ENCODE measurements at regions of chr16 and their contacts with region 1.

Region 1: DNA sequence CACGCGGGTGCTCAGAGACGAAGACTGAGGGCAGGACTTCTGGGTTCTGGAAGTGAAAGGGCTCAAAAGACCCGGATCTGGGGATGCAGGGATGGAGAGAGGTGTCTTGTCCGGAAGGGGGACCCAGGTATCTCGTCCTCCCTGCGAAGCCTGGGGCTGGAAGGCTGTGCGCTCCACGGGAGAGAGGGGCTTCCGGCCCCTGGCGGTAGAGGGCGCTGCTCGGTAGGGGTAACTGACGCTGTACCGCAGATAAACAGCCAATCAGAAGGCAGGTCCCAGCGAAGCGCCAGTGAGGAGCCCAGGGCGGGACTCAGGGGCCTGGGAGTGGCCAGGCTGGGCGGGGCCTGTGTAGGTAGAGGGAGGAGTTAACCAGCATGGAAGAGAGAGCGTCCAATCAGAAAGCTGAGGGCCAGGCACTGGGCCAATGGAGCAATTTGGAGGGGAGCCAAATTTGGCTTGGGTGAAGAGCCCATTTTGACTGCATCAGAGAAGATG is 804 bp downstream of the TGFB1I1 start:
- DNase-seq: no peak
- H3K4me3 Mint-ChIP-seq: peak overlapping the region; percentile 70
- H3K27ac Mint-ChIP-seq: no peak overlapping the region
- H3K4me1 Mint-ChIP-seq: peaks cover 20% of the 10 kb centered on the region
- H3K27me3 Mint-ChIP-seq: peaks cover 46% of the 10 kb centered on the region

Region 2: DNA sequence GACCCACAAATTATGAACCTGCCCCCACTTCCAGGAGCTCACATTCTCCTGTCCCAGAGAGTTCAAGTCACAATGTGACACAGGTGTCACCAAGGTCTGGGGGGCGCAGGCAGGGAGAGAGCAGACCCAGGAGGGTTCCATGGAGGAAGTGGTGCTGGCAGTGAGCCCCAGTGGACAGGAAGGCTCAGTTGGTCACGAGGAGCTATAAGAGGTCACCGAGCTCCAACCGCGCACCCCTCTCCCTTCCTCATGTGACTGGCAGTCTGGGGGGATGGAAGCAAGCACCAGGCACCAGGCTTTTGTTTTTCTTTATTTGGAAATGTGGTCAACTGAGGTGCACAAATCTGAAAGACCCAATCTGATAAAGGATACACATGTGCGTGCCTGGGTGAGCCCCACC is 77.1 kb before region 1 on chr16:
- intact Hi-C with region 1: no loop called
- DNase-seq: no peak
- H3K4me3 Mint-ChIP-seq: no peak overlapping the region
- H3K27ac Mint-ChIP-seq: no peak overlapping the region
- H3K4me1 Mint-ChIP-seq: peaks cover 8% of the 10 kb centered on the region
- H3K27me3 Mint-ChIP-seq: peaks cover 9% of the 10 kb centered on the region

Region 3: GRCh38 chr16:31487720-31488467 is 15.1 kb after region 1 on chr16:
- intact Hi-C with region 1: loop called (anchors 1 kb)
- DNase-seq: peak; percentile 59
- H3K4me3 Mint-ChIP-seq: peak overlapping the region; percentile 87
- H3K27ac Mint-ChIP-seq: no peak overlapping the region
- H3K4me1 Mint-ChIP-seq: no peaks in the 10 kb centered on the region
- H3K27me3 Mint-ChIP-seq: peaks cover 24% of the 10 kb centered on the region

Region 4: GRCh38 chr16:31507929-31508705 is 35.4 kb after region 1 on chr16 and contains the start of gene RUSF1:
- intact Hi-C with region 1: loop called (anchors 1 kb)
- DNase-seq: peak; percentile 81
- H3K4me3 Mint-ChIP-seq: peak within 1 kb of the TSS; percentile 95
- H3K27ac Mint-ChIP-seq: peak within 1 kb of the TSS; percentile 93
- H3K4me1 Mint-ChIP-seq: peaks cover 49% of the 10 kb centered on the region
- H3K27me3 Mint-ChIP-seq: no peaks in the 10 kb centered on the region
- total RNA-seq, gene RUSF1: 36.3 and 42.2 TPM in 2 replicates

Region 5: DNA sequence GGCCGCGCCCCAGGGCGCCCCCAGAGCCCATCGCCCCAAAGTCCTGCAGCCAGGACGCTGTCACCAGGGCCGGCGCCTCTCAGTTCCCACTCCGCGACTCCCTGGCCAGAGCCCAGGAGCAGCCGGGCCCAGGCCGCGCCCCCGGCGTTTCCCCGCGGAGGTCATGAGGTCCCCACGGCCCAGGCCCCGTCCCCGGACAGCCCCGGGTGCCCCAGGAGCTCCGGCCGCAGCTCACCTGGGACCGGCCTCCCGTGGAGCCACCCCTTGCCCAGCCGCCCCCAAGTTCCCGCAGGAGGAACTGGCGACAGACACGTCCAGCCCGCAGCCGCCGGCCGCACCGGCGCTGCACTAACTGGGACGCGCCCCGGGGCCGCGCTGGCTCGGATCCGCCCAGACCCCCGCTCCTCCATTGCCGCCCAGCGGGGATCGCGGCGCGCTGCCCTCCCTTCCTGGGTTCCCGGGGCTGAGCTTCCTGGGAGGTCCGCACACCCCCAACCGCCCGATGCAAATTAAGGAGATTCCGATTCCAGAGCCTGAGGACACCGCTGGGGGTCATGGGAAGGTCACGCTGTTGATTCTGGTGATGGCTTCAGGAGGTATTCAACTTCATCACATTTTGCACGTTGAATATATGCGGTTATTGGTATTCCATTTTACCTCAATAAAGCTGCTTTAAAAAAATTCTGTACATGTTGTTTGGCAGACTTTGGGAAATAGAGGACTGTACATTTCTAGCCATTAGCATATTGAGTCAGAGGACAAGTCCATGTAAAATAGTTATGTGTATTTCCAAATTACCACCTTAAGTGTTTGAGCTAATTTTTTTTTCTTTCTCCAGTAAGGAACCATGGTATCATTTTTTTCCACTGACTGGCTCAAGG is 64.8 kb after region 1 on chr16:
- intact Hi-C with region 1: loop called (anchors 10 kb)
- DNase-seq: no peak
- H3K4me3 Mint-ChIP-seq: no peak overlapping the region
- H3K27ac Mint-ChIP-seq: no peak overlapping the region
- H3K4me1 Mint-ChIP-seq: no peaks in the 10 kb centered on the region
- H3K27me3 Mint-ChIP-seq: peaks cover 20% of the 10 kb centered on the region

Region 6: DNA sequence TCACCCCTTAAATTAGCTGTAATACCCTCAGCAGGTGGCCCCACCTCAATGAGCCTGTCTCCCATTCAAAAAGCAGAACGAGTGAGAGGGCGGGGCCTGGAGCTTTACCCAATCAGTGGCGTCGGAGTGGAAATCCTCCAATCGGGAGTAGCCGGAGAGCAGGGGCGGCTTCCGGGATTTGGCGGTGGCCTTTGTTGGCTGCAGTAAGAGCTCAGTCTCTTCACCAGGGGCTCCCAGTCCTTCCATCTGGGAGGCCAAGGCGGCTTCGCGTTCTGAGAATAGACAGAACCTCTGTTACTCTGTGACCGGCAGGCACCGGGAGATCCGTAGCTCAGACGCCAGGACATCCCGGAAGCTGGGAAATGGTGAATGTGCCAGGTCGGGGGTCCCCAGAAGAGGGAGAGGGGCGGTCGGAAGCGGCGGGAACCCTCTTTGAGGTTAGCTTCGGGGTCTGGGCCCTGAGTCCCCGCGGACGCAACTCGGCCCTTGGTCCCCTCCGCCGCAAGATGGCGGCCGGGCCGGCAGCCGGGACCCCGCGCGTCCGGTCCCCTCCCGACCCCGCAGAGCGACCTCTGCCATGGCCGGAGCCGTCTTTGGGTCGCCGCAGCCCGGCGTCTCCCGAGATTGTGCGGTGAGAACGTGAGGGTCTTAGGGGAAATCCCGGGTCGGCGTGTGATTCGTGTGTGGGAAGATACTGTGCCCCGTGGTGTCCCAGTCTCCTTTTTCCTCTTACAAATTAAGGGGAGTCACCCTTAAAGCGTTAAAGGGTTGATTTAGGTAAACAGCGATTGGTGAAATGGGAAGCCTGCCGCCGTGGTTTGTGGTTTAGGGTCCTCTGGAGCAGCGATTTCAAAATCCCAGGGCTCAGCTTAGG is 240.6 kb after region 1 on chr16:
- intact Hi-C with region 1: loop called (anchors 2 kb)
- DNase-seq: peak; percentile 86
- H3K4me3 Mint-ChIP-seq: peak overlapping the region; percentile 99
- H3K27ac Mint-ChIP-seq: peak overlapping the region; percentile 99
- H3K4me1 Mint-ChIP-seq: peaks cover 31% of the 10 kb centered on the region
- H3K27me3 Mint-ChIP-seq: no peaks in the 10 kb centered on the region